Testis (tissue), 5 donors: ENCODE measurements at regions of chr3 and their contacts with region 1.

Region 1: DNA sequence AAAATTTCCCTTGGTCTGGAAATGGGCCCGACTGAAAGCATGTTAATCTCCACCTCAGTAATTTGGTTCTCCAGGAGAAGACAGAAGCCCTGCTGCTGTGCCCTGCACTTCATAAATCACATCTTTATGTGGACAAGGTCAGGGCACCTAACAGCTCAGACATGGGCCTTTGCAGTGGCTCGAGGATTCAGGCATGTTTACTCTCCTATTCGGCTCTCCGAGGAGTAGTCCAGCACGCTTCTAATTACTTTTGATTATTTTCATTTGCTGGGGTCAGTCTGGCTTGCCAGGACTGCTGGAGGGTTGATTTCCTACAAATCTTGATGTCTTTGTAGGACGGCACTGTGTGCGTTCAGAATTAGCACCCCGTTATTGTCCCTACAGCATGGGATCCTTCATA is 511.2 kb downstream of the MECOM start:
- DNase-seq: no peak
- H3K4me3 ChIP-seq: no peak overlapping the region
- H3K27ac ChIP-seq: no peak overlapping the region
- H3K4me1 ChIP-seq: peaks cover 7% of the 10 kb centered on the region
- H3K27me3 ChIP-seq: no peaks in the 10 kb centered on the region
- CTCF ChIP-seq: no peak
- POLR2A ChIP-seq: no peak

Region 2: DNA sequence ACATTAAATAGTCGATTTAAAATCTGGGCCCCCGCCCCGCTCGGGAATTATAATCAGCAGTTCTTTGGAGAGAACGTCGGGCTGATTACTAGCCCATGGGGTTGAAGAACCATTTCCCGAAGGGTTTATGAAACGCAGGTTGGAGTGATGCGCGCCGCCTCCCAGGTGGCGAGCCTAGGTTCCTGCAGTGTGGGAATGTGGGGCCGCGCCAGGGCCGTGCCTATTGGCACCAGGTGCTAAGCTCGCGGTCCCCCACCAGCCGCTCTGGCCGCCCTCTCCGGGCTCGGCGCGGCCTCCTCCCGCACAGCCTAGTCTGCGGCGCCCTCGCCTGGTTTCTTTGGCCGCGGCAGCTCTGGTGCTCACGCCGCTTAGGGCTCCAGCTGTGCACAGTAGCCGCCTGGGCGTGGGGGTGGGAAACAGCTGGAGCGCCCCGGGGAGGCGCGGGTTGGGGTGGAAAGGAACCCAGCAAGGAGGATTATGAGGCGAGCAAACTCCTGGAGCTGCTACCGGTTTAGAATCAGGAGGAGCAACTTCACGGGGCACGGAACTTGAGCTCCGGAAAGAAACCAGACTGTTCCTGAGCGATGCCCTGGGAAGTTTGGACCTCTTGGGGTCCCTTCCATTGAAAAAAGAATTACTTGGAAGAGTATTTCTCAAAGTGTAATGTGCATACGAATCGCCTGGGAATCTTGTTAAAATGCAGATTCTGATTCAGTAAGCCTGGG is 516.8 kb after region 1 on chr3:
- intact Hi-C with region 1: loop called (anchors 10 kb)
- DNase-seq: peak; percentile 76
- H3K4me3 ChIP-seq: peak overlapping the region; percentile 23 to 51
- H3K27ac ChIP-seq: no peak overlapping the region
- H3K4me1 ChIP-seq: peaks cover 9% of the 10 kb centered on the region
- H3K27me3 ChIP-seq: no peaks in the 10 kb centered on the region
- CTCF ChIP-seq: peak in 1 of 3 experiments; percentile 65
- POLR2A ChIP-seq: no peak